ENCODE measurements at regions of chr3 and their contacts with region 1.

Region 1: DNA sequence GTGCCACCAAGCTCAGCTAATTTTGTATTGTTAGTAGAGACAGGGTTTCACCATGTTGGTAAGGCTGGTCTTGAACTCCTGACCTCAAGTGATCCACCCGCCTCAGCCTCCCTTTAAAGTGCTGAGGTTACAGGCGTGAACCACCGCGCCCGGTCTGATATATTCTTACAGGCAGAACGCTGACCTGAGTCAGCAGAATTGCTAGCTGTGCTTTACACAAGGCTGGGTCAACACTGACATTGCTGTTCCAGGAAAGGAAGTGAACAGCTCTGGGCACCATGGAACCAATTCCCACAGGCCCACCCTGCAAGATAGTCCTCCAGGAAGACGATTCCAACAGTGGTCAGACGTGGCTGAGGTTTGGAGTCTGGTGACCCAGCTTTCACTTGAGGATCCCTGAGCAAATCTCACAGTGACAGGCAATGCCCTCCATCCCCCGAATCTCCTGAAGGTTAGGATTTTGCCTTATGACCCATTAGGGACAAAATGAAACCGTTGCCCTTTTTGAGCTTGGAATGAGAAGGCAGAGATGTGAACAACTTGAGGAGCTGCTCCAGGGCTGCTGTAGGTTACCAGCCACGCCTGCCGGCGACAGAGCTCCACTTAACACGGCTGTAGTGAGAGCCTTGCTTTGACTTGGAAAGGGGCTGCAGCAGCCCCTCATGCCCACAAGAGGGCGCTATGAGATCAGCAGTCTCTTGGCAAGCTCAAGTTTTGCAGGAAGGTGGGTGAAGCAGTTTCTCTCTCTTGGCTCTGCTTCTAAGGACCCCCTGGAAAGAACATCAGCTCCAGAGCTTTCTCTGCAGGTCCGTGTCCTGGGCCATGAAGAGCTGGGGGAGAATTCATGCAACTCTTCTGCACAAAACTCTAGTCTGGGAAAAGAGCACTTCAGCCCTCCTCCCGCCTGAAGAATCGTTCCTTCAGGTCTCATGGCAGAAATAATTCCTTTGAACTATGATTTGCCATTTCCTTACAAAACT is 74.1 kb downstream of the SENP2 start:
- DNase-seq: peak; percentile 77
- H3K4me3 Mint-ChIP-seq: no peak overlapping the region
- H3K27ac Mint-ChIP-seq: no peak overlapping the region
- H3K4me1 Mint-ChIP-seq: no peaks in the 10 kb centered on the region
- H3K27me3 Mint-ChIP-seq: peaks cover 31% of the 10 kb centered on the region

Region 2: DNA sequence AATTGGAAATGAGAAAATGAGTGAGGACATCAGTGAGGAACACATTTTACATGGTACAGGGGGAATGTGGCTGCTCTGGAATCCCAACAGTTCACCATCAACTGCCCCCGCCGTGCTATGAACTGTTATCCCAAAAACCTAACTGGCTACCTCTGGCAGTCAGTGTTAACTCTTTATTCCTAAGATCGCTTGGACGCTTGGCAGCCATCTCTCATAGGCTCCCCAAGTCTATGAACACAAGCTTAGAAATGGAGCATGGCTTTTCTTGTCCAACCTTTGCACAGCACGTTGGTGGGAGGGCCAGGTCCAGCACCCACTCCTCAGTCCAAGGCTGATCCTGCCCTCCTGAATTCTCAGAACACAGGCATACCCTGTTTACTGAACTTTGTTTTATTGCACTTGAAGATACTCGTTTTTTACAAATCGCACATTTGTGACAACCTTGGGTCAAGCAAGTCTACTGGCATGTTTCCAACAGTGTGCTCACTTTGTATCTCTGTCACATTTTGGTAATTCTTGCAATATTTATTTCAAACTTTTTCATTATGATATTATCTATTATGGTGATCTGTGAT is 20.5 kb before region 1 on chr3:
- CTCF ChIA-PET with region 1: interaction called, 11 read pairs
- DNase-seq: no peak
- H3K4me3 Mint-ChIP-seq: no peak overlapping the region
- H3K27ac Mint-ChIP-seq: no peak overlapping the region
- H3K4me1 Mint-ChIP-seq: no peaks in the 10 kb centered on the region
- H3K27me3 Mint-ChIP-seq: peaks cover 25% of the 10 kb centered on the region

Region 3: DNA sequence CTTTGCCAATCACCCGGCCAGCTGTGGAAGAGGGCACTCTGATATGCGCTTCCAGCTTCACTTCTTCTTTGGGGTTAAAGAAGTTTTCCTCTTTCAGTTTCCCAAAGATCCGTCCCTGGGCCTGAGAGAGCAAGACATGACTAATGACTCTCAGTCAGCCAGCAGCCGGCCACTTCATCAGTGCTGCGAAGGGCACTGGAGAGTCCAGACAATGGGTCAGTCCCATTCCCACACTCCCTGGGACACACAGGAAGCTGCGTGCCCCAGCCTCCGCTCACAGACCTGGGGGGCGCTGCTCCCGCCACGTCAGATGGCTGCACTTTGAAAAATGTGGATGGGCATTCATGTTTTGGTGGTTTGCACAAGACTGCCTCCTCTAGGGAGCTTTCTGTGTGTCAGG is 10.8 kb before region 1 on chr3:
- CTCF ChIA-PET with region 1: interaction called, 19 read pairs
- DNase-seq: no peak
- H3K4me3 Mint-ChIP-seq: no peak overlapping the region
- H3K27ac Mint-ChIP-seq: no peak overlapping the region
- H3K4me1 Mint-ChIP-seq: no peaks in the 10 kb centered on the region
- H3K27me3 Mint-ChIP-seq: peaks cover 48% of the 10 kb centered on the region

Region 4: DNA sequence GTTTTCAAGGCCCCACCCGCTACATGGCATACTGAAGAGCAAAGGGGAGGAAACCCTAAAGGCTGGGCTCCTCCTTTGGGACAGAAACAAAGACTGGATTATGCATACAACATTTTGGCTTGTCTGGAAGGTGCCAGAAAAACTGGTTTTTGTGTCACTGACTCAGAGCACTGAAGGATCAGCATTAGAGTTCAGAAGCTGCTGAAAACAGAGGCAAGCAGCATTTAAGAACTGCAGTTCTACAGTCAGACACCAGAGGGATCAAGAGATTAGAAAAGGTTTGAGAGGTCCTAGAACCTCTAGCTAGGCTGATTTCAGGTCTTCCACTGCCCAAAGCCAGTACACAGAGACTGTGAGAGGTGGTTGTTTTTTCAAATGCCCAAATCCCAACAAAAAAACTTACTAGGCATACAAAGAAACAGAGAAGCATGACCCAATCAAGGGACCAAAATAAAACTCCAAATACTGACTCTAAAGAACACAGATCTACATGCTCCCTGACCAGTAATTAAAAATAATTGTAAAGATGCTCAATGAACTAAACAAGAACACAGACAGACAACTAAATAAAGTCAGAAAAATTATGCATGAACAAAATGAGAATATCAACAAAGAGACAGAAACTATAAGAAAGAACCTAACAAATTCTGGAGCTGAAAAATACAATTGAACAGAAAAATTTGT is 17.1 kb after region 1 on chr3:
- CTCF ChIA-PET with region 1: interaction called, 16 read pairs
- DNase-seq: no peak
- H3K4me3 Mint-ChIP-seq: no peak overlapping the region
- H3K27ac Mint-ChIP-seq: no peak overlapping the region
- H3K4me1 Mint-ChIP-seq: no peaks in the 10 kb centered on the region
- H3K27me3 Mint-ChIP-seq: peaks cover 11% of the 10 kb centered on the region

Region 5: GRCh38 chr3:185764163-185764979 is 104.1 kb after region 1 on chr3:
- CTCF ChIA-PET with region 1: interaction called, 56 read pairs
- DNase-seq: no peak
- H3K4me3 Mint-ChIP-seq: no peak overlapping the region
- H3K27ac Mint-ChIP-seq: no peak overlapping the region
- H3K4me1 Mint-ChIP-seq: peaks cover 3% of the 10 kb centered on the region
- H3K27me3 Mint-ChIP-seq: peaks cover 61% of the 10 kb centered on the region